A549 (cell line): ENCODE measurements at regions of chr12 and their contacts with region 1.

Region 1: DNA sequence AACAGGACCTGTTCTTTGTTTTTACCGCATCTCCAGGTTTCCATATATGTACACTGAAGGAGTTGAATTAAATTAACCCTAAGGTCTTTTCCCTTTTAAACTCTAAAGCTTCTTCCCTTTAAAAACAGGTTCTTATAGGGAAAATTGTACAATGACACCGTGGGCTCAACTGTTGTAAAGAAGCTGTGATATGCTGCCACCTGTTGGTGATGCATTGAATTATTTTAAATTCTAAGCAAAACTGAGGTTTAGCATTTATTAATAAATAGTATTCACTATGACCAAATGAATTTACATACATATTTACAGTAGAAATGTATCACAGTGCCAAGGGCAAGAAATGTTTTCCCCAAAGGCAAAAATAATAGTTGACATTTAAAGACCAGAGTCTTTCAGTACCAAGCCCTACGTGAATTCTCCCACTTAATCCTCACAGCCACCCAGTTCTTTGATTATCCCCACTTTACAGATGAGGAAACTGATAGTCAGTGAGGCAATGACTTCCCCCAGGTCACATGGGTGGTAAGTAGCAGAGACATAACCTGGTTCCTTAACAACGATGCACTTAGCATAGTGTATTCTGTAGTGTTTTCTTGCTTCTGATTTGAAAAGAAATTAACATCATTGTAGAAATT is 35.7 kb upstream of the TMEM263 start:
- DNase-seq: peak; percentile 55 to 59
- ATAC-seq: peak; percentile 44 to 74; a peak in 3 of 6 replicates
- H3K4me3 ChIP-seq: no peak overlapping the region
- H3K27ac ChIP-seq: no peak overlapping the region
- H3K4me1 ChIP-seq: no peaks in the 10 kb centered on the region
- CTCF ChIP-seq: peak; percentile 91
- EP300 ChIP-seq: no peak
- POLR2A ChIP-seq: no peak
- RAD21 ChIP-seq: peak; percentile 86 to 89

Region 2: GRCh38 chr12:106378788-106379187 is 541.2 kb before region 1 on chr12:
- CTCF ChIA-PET with region 1: interaction called, 43 read pairs
- POLR2A ChIA-PET with region 1: no interaction called
- DNase-seq: no peak
- ATAC-seq: no peak
- H3K4me3 ChIP-seq: no peak overlapping the region
- H3K27ac ChIP-seq: no peak overlapping the region
- H3K4me1 ChIP-seq: no peaks in the 10 kb centered on the region
- CTCF ChIP-seq: no peak
- EP300 ChIP-seq: no peak
- POLR2A ChIP-seq: no peak
- RAD21 ChIP-seq: no peak

Region 3: DNA sequence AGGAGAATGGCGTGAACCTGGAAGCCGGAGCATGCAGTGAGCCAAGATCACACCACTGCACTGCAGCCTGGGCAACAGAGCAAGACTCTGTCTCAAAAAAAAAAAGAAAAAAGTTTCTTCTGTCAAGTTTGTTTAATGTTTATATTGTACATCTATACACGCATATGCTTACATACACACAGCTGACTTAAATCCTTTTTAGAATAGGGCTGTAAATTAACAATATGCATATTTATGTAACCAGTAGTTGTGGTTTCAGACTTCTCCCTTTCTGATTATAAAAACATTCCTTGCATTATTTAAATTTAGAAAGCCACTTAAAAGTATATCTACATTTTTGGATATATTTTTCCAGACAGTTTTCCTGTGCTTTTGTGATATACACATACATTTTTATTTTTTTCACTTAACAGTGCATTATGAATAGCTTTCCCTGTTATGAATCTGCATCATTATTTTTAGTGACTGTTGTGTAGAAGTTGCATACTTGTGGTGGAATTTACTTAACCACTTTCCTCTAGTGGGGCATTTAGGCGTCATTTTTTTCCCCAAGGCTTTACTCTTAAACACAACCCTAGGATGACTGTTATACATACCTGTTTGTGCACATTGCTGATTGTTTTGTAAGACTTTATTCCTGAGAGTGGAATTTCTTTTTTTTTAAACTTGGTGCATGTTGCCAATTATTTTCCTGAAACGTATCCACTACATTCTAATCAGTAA is 533.1 kb before region 1 on chr12:
- CTCF ChIA-PET with region 1: interaction called, 43 read pairs
- POLR2A ChIA-PET with region 1: no interaction called
- DNase-seq: no peak
- ATAC-seq: no peak
- H3K4me3 ChIP-seq: no peak overlapping the region
- H3K27ac ChIP-seq: no peak overlapping the region
- H3K4me1 ChIP-seq: no peaks in the 10 kb centered on the region
- CTCF ChIP-seq: no peak
- EP300 ChIP-seq: no peak
- POLR2A ChIP-seq: no peak
- RAD21 ChIP-seq: no peak

Region 4: DNA sequence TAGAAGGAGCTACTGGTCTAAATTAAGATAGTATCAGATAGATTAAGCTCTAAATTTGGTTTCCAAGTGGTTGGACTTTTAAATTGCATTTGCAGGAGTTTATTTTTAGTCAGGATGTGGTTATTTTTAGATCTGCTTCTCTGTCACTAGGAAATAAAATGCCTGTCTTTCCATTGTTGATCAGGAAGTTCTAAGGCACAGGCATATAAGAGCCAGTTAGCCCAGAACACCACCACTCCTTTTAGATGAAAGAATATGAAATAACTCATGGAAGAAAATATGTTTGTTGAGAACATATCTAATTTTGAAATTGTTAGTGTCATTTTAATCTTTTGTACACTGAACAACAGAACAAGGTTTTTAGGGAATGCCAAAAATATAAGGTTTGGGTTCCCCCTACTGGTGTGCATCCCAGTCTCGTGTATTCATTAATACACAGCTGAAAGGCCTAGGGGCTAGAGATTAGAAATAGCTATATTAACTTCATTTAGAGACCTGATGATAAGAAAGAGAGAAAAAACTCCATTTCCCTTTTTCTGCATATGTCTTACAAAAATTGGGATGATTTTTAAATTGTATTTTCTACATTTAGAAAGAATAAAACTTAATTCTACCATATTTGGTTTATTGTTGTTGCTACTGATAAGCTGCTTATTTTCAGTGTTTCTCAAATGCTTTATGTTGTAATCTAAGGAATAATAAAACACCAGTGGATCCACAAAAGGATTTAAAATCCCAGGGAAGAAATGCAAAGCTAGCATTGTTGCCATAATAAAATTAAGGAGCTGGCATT is 78.3 kb before region 1 on chr12:
- CTCF ChIA-PET with region 1: interaction called, 13 read pairs
- POLR2A ChIA-PET with region 1: no interaction called
- DNase-seq: peak; percentile 50 to 59
- ATAC-seq: peak; percentile 81 to 89
- H3K4me3 ChIP-seq: no peak overlapping the region
- H3K27ac ChIP-seq: peak overlapping the region in 1 of 2 experiments; percentile 9; a peak in 3 of 6 replicates
- H3K4me1 ChIP-seq: peaks cover 28% of the 10 kb centered on the region
- CTCF ChIP-seq: peak; percentile 90
- EP300 ChIP-seq: no peak
- POLR2A ChIP-seq: no peak
- RAD21 ChIP-seq: peak; percentile 90 to 92

Region 5: GRCh38 chr12:106903241-106903945 is 16.6 kb before region 1 on chr12:
- CTCF ChIA-PET with region 1: interaction called, 41 read pairs
- POLR2A ChIA-PET with region 1: no interaction called
- DNase-seq: peak; percentile 47 to 87
- ATAC-seq: peak; percentile 97 to 98
- H3K4me3 ChIP-seq: peak overlapping the region; percentile 42
- H3K27ac ChIP-seq: peak overlapping the region in 1 of 2 experiments; percentile 38; a peak in 2 of 6 replicates
- H3K4me1 ChIP-seq: no peaks in the 10 kb centered on the region
- CTCF ChIP-seq: no peak
- EP300 ChIP-seq: no peak
- POLR2A ChIP-seq: no peak
- RAD21 ChIP-seq: no peak

Region 6: DNA sequence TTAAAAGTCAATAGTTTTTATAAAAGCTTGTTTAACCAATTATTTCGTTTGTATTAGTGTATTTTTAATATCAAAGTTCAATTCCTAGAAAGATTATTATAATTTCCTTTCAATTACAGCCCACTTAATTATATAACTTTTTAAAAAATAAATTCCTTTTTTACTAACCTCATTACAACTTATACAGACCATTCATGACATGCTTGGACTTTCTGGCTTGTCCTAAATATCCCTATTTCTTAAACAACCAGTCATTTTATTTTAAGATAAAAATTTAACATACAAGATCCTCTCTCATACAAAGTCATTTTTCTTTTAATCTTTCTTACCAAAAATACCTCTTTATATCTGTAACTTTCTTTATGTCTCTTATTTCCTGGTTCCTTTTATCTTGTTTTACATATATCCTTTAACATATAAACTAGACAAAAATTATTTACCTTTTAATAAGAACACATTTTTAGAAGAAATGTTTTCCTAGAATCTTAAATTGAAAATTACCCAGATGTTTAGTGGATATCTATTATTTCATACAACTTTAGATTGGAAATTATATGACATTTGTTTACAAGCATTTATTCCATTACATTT is 25.3 kb after region 1 on chr12:
- CTCF ChIA-PET with region 1: interaction called, 11 read pairs
- POLR2A ChIA-PET with region 1: no interaction called
- DNase-seq: no peak
- ATAC-seq: no peak
- H3K4me3 ChIP-seq: no peak overlapping the region
- H3K27ac ChIP-seq: no peak overlapping the region
- H3K4me1 ChIP-seq: no peaks in the 10 kb centered on the region
- CTCF ChIP-seq: no peak
- EP300 ChIP-seq: no peak
- POLR2A ChIP-seq: no peak
- RAD21 ChIP-seq: no peak